MCF 10A (cell line): ENCODE measurements at regions of chr19 and their contacts with region 1.

Region 1: GRCh38 chr19:50368649-50369570 is 3.5 kb upstream of the NAPSA start:
- DNase-seq: peak; percentile 91
- H3K4me3 Mint-ChIP-seq: peak overlapping the region; percentile 89
- H3K27ac Mint-ChIP-seq: peak overlapping the region; percentile 79
- H3K4me1 Mint-ChIP-seq: peaks cover 6% of the 10 kb centered on the region
- H3K27me3 Mint-ChIP-seq: no peaks in the 10 kb centered on the region
- CTCF ChIP-seq: peak; percentile 83

Region 2: DNA sequence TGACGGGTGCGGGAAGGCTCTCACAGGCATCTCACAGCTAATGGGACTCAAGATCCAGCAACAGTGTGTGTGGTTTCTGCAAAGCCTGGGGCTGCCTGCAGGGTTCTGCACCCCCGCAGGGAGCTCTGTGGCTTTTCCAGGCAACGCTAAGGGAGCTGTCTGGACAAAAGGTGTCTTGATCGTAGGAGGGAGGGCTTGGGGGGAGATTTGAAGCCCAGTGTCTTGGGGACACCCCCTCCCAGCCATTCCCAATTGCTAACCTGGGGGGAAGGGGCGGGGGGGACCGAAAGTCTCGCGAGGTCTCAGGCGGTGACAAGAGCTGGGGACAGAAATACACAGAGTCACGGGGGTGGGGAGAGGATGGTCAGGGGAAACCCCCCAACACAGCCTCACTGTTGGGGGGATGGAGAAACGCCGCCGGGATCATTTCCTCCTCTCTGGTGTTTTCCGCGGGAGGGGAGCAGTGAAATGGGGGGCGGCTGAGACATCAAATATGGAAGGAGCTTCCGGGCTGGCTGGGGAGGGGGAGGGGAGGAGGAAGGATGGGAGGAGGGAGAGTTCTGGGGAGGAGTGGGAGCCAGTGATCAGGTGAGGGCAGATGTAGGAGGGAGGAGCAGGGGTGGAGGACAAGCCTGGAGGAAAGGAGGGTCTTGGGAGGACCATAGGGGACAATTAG is 53.0 kb before region 1 on chr19:
- CTCF ChIA-PET with region 1: no interaction called
- POLR2A ChIA-PET with region 1: no interaction called
- intact Hi-C with region 1: no loop called
- DNase-seq: no peak
- H3K4me3 Mint-ChIP-seq: no peak overlapping the region
- H3K27ac Mint-ChIP-seq: no peak overlapping the region
- H3K4me1 Mint-ChIP-seq: peaks cover 6% of the 10 kb centered on the region
- H3K27me3 Mint-ChIP-seq: peaks cover 33% of the 10 kb centered on the region
- CTCF ChIP-seq: no peak

Region 3: DNA sequence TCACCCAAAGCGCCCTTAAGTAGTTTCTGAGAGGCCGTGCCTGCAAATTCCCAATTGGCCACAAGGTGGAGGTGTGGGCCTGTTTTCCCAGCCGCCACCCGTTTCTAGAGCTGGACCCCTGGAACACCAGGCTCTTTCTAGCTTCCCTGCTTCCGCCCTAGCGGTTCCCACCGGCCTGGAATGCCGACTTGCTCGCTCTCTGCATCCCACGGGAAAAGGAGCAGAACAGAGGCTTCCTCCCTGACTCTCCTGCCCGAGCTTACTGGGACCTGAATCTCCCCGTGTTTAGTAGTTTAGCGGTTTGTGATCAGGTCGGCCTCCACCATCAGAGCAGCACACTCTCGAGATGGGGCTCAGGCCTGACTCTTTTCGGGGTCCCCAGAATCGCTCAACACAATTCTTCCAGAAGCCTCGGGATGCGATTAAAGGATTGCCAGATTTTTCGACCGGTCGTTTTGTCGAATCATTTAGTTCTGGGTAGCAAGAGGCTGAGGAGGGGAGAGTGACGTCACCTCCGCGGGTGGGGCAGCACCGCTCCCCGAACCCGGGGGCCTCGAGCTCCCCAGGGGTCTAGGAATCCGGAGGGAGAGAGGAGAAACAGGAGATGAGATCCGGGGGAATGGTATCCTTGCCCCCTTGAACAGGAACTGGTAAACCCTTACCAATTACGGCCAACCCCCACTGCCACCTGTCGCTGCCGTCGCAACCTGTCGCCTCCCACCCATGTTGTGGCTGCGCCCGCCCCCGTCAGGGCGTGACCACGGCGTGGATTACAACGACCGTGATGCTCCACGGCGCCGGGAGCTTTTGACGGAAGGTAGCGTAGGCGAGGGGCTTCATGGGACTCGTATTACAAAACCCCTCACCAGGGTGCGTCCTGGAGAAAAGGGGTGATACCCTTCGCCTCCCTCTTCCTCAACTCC is 11.5 kb before region 1 on chr19:
- CTCF ChIA-PET with region 1: interaction called, 11 read pairs
- POLR2A ChIA-PET with region 1: no interaction called
- intact Hi-C with region 1: no loop called
- DNase-seq: peak; percentile 61
- H3K4me3 Mint-ChIP-seq: peak overlapping the region; percentile 67
- H3K27ac Mint-ChIP-seq: no peak overlapping the region
- H3K4me1 Mint-ChIP-seq: no peaks in the 10 kb centered on the region
- H3K27me3 Mint-ChIP-seq: no peaks in the 10 kb centered on the region
- CTCF ChIP-seq: peak; percentile 87

Region 4: DNA sequence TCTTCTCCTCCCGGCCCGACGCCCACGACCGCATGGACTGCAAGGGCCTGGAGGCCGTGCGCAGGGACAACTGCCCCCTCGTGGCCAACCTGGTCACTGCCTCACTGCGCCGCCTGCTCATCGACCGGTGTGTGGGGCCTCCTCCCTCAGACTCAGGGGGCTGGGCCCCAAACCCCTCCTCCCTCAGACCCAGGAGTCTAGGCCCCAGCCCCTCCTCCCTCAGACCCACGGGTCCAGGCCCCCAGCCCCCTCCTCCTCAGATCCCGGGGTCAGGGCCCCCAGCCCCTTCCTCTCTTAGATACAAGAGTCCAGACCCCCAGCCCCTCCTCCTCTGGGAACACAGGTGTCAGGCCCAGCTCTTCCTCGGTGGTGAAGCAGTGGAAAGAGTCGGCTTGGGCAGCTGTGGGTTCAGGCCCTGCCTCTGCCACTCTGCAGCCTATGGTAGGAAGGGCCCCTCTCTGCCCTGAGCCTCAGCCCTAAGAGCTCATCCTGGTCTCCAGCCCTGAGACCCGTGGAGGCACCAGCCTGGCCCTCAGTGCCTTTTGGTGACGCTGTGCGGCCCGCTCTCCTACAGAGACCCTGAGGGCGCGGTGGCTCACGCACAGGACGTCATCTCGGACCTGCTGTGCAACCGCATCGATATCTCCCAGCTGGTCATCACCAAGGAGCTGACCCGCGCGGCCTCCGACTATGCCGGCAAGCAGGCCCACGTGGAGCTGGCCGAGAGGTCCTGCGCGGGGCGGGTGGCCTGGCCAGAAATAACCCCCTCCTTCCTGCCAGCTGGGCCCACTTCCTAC is 46.2 kb after region 1 on chr19:
- CTCF ChIA-PET with region 1: no interaction called
- POLR2A ChIA-PET with region 1: no interaction called
- intact Hi-C with region 1: loop called (anchors 1 kb)
- DNase-seq: peak; percentile 53
- H3K4me3 Mint-ChIP-seq: no peak overlapping the region
- H3K27ac Mint-ChIP-seq: no peak overlapping the region
- H3K4me1 Mint-ChIP-seq: no peaks in the 10 kb centered on the region
- H3K27me3 Mint-ChIP-seq: peaks cover 15% of the 10 kb centered on the region
- CTCF ChIP-seq: peak; percentile 72

Region 5: DNA sequence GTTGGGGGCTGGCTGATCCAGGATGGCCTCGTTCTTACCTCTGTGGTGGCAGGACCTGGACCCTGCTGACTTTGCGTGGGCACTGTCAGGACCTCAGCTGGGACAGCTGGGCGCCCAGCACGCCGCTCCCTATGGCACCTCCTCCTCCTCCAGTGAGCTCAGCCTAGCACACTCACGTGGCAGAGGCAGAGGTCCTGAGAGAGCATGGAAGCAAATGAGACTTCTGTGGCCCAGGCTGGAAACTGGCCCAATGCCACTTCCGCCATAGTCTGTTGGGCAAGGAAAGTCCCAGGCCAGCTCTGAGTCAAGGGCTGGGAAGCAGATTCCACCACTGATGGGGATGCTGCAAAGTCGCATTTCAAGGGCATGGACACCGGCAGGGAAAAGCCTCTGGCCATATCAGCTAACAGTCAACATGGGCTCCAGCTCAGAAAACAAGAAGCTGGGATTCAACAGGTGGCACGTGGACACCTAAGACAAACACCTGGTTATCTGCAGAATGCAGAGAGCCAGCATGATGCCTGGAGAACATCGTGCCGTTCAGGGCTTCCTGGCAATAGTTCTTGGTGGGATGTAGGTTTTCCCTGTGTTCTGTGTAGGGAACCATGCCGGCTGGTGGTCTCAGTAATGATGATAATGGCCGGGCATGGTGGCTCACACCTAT is 80.5 kb after region 1 on chr19:
- CTCF ChIA-PET with region 1: no interaction called
- POLR2A ChIA-PET with region 1: no interaction called
- intact Hi-C with region 1: no loop called
- DNase-seq: no peak
- H3K4me3 Mint-ChIP-seq: no peak overlapping the region
- H3K27ac Mint-ChIP-seq: no peak overlapping the region
- H3K4me1 Mint-ChIP-seq: no peaks in the 10 kb centered on the region
- H3K27me3 Mint-ChIP-seq: peaks cover 11% of the 10 kb centered on the region
- CTCF ChIP-seq: no peak

Region 6: DNA sequence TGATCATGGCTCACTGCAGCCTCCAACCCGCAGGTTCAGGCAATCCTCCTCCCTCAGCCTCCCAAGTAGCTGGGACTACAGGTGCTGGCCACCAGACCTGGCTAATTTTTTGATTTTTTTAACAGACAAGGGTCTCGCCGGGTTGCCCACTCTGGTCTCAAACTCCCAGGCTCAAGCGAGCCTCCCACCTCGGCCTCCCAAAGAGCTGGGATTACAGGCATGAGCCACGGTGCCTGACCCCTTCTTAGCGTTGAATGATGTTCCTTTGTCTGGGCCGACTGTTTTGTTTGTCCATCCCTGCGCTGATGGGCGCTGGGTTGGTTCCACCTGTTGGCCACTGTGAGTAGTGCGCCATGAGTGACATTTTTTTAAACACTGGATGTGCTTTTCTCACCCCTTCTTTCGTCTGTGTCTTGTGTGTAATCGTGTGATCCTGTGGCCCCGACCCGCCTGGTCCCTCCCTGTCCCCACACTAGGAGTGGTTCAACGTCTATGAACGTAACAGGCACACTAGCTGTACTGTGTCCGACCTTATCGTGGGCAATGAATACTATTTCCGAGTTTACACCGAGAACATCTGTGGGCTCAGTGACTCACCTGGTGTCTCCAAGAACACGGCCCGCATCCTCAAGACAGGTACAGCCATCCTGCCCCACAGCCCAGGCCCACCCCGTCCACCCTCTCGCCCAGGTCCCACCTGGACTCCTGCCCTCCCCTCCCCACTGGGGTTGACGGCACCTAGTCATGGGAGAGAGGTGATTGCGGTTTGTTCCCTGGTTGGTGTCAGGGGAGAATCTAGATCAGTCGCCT is 92.4 kb after region 1 on chr19:
- CTCF ChIA-PET with region 1: interaction called, 11 read pairs
- POLR2A ChIA-PET with region 1: interaction called, 4 read pairs
- intact Hi-C with region 1: loop called (anchors 1 kb)
- DNase-seq: peak; percentile 78
- H3K4me3 Mint-ChIP-seq: no peak overlapping the region
- H3K27ac Mint-ChIP-seq: no peak overlapping the region
- H3K4me1 Mint-ChIP-seq: no peaks in the 10 kb centered on the region
- H3K27me3 Mint-ChIP-seq: peaks cover 14% of the 10 kb centered on the region
- CTCF ChIP-seq: peak; percentile 81

Region 7: DNA sequence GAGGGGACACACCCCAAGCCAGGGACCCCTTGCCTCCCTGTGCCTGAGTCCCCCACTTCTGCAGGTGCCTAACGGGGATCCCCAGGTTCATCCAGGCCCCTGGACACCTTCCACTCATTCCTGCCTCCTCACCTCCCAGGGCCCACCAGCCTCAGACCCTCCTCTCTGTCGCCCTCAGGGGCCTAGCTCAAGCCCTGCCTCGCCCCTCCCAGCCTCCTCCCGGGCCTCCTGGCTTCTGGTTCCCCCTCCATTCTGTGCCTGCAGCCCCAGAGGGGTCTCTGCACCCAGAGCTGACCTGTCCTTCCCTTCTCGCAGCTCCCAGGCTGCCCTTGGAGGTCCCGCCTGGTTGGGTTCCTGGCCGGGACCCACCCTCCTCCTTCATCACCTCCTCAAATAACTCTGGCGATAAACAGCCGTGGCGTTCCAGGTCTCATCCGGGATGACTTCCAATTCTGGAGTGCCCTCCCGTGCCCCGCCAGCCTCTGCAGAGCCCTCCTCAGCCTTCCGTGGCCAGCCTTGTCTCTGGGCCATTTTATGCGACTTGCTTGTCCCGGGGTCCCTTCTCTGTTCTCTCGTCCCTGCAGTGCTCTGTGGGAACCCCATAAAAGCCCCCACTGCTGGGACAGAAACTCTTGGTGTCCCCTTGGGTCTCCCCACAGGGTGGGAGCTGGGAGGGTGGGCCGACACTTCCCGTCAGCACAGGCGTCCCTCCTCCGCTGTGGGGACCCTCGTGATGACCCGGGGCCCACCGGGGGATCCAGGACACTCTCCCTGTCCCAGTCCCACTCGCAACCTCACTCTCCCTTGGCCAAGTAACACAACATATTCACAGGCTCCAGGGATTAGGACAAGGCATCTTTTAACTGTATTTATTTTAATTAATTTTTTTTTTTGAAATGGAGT is 132.9 kb after region 1 on chr19:
- CTCF ChIA-PET with region 1: no interaction called
- POLR2A ChIA-PET with region 1: no interaction called
- intact Hi-C with region 1: no loop called
- DNase-seq: no peak
- H3K4me3 Mint-ChIP-seq: no peak overlapping the region
- H3K27ac Mint-ChIP-seq: no peak overlapping the region
- H3K4me1 Mint-ChIP-seq: no peaks in the 10 kb centered on the region
- H3K27me3 Mint-ChIP-seq: no peaks in the 10 kb centered on the region
- CTCF ChIP-seq: no peak

Region 8: DNA sequence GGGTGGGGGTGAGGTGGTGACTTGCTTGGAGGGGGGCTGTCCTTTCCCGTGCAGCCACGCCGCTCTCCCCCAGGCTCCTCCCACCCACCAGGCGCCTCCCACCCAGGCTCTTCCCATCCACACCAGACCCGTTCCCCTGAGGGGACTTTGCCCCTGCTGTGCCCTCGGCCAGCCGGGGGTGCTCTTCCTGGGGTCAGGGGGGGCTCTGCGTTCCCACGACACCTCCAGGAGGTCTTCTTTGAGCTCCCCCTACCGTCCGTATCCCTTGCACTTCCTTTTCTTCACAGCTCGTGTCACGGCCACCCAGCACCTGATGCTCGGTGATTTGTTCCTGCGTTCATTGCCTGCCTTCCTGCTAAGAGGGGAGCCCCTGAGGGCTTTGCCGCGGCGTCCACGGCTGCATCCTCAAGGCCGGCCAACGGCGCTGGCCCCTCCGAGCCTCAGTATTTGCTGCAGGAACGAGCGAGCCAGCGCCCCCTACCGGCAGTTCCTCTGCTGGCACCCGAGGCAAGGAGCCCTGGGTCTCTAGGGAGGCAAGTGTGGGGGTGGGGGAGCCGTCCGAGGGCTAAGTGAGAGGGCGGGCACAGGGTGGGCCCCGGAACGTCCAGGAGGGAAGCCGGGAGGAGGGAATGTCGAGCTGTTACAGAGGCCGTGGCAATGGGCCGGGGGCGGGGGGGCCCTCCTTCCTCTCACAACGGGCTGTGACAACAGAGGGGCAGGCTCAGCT is 187.5 kb after region 1 on chr19:
- CTCF ChIA-PET with region 1: interaction called, 3 read pairs
- POLR2A ChIA-PET with region 1: no interaction called
- intact Hi-C with region 1: loop called (anchors 5 kb)
- DNase-seq: peak; percentile 52
- H3K4me3 Mint-ChIP-seq: peak overlapping the region; percentile 75
- H3K27ac Mint-ChIP-seq: peak overlapping the region; percentile 9
- H3K4me1 Mint-ChIP-seq: peaks cover 6% of the 10 kb centered on the region
- H3K27me3 Mint-ChIP-seq: peaks cover 55% of the 10 kb centered on the region
- CTCF ChIP-seq: no peak

Region 9: DNA sequence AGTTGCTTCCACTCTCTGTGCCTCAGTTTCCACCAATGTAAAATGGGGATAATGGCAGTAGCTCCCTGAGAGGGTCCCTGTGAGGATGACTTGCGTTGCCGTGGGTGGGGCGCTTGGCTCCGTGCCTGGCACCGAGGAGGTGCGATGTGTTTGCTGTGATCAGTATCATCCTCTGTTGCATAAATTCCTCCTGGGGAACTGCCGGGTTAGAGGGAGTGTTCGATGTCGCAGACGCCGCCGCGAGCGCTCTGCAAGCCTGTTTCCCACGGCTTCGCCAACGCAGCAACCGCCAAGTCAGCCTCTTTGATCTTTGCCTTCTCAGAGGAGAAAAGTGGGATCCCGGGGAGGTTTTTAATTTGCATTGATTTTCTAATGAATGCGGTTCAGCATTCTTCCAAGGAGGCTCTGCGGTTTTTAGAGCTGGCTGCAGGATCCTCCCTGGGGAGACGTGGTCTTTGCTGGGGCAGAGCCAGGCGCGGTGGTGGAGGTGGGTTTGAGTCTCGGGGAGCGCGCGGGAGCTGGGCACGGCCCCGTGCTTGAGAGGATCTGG is 408.9 kb after region 1 on chr19:
- CTCF ChIA-PET with region 1: interaction called, 19 read pairs
- POLR2A ChIA-PET with region 1: no interaction called
- intact Hi-C with region 1: loop called (anchors 1 kb)
- DNase-seq: no peak
- H3K4me3 Mint-ChIP-seq: no peak overlapping the region
- H3K27ac Mint-ChIP-seq: no peak overlapping the region
- H3K4me1 Mint-ChIP-seq: peaks cover 6% of the 10 kb centered on the region
- H3K27me3 Mint-ChIP-seq: peaks cover 47% of the 10 kb centered on the region
- CTCF ChIP-seq: no peak

Region 10: GRCh38 chr19:50785329-50785728 is 416.4 kb after region 1 on chr19:
- CTCF ChIA-PET with region 1: interaction called, 19 read pairs
- POLR2A ChIA-PET with region 1: interaction called, 4 read pairs
- intact Hi-C with region 1: loop called (anchors 1 kb)
- DNase-seq: no peak
- H3K4me3 Mint-ChIP-seq: no peak overlapping the region
- H3K27ac Mint-ChIP-seq: no peak overlapping the region
- H3K4me1 Mint-ChIP-seq: no peaks in the 10 kb centered on the region
- H3K27me3 Mint-ChIP-seq: peaks cover 13% of the 10 kb centered on the region
- CTCF ChIP-seq: no peak